ENCODE measurements at regions of chr2 and their contacts with region 1.

Region 1: DNA sequence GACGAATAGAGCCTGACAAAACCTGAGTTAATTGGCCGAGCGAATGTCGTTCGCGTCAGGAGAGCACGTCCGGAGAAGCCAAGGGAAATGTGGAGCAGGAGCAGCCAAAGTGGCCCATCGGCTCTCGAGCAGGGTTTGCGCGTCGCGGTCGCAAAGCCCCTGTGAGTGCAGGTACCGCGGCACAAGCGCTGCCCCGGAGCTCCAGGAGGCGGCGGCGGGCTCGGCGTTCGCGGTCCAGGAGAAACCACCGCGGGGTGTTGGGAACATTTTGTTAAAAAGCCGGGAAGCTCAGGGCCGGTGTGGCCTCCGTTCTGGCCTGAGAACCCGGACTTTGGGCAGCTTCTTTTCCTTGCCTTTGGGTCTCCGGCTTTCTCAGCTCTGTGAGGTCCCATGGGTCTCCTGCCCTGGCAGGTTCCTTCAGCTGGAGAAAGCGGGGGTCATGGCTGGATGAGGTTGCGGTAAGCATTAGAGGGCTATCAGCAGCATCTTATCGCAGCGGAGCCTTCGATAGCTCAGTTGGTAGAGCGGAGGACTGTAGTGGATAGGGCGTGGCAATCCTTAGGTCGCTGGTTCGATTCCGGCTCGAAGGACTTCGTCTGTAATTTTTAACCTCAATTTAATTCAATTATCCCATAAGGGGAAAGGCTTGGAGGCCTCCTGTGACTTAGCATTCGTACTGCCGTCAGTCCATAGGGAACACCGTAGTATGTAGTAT is 1.0 kb upstream of the AGBL5 start:
- DNase-seq: peak; percentile 95
- ATAC-seq: peak; percentile 84
- H3K4me3 Mint-ChIP-seq: peak overlapping the region; percentile 93
- H3K27ac Mint-ChIP-seq: peak overlapping the region; percentile 98
- H3K4me1 Mint-ChIP-seq: peaks cover 12% of the 10 kb centered on the region
- H3K27me3 Mint-ChIP-seq: peaks cover 10% of the 10 kb centered on the region
- CTCF ChIP-seq: no peak

Region 2: DNA sequence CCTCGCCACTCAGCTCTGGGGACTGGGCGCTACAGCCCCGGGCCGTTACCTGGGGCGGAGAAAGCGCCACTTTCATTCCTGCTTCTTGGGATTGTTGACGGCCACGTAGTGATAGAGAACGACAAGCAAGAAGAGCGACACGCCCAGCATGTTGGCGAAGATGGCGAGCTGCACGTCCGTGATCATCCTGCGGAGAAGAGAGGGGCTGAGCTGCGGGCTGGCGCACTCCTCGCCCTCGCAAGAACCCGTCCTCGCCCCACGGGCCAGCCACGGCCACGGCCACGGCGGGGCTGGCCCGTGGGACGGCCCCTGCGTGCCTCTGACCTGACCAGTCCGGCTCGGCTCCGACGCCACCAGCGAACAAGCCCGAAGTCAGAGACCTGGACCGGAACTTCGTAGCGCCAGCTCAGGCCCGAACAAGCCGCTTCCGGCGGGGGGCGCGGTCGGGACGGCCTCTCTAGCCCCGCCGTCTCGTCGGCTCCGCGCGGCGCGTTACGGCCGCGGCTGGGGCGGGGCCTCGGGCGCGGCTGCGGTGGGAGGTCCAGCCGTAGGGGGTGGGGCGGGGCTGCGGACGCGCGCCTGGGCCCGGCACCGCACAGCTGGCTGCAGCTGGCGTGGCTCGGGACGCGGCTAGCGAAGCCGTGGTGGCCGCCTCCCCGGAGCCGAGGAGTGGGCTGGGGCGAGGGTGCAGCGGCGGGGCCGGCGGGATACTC is 21.0 kb after region 1 on chr2 and contains the start of gene OST4:
- CTCF ChIA-PET with region 1: interaction called, 17 read pairs
- POLR2A ChIA-PET with region 1: interaction called, 27 read pairs
- DNase-seq: peak; percentile 90
- ATAC-seq: peak; percentile 89
- H3K4me3 Mint-ChIP-seq: peak within 1 kb of the TSS; percentile 98
- H3K27ac Mint-ChIP-seq: peak within 1 kb of the TSS; percentile 90
- H3K4me1 Mint-ChIP-seq: peaks cover 11% of the 10 kb centered on the region
- H3K27me3 Mint-ChIP-seq: peaks cover 3% of the 10 kb centered on the region
- CTCF ChIP-seq: no peak
- total RNA-seq, gene OST4: 210 to 239 TPM (median 226 TPM) in 3 replicates

Region 3: GRCh38 chr2:27080140-27080469 is 29.7 kb after region 1 on chr2:
- CTCF ChIA-PET with region 1: interaction called, 18 read pairs
- POLR2A ChIA-PET with region 1: interaction called, 3 read pairs
- DNase-seq: no peak
- ATAC-seq: no peak
- H3K4me3 Mint-ChIP-seq: no peak overlapping the region
- H3K27ac Mint-ChIP-seq: no peak overlapping the region
- H3K4me1 Mint-ChIP-seq: peaks cover 22% of the 10 kb centered on the region
- H3K27me3 Mint-ChIP-seq: peaks cover 19% of the 10 kb centered on the region
- CTCF ChIP-seq: no peak

Region 4: DNA sequence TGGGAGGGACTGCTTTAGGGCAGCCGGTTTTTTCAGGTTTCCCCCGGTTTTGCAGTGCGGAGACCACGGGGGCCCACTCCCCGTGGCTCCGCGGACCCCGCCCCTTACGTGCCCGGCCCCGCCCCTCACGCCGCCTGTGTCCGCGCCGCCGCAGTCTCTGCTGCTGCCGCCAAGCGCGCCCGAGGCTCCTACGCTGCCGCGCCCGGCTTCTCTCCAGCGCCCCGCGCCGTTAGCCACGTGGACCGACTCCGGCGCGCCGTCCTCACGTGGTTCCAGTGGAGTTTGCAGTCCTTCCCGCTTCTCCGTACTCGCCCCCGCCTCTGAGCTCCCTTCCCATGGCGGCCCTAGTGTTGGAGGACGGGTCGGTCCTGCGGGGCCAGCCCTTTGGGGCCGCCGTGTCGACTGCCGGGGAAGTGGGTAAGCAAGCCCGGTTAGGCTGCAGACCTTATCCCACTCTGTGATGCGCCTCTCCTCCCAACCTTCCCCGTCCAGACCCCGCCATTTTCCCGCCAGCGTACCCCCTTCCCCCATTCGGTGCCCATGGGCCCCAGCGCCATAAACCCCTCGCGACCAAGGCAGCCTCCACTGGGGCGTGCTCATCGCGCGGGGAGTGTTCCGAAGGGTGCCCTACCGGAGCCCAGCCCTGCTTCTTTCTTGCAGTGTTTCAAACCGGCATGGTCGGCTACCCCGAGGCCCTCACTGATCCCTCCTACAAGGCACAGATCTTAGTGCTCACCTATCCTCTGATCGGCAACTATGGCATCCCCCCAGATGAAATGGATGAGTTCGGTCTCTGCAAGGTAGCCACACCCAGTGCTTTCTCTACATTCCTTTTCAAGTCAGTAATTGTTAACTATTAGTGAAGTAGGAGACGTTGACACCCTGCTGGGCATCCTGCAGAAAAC is 167.0 kb after region 1 on chr2 and contains the start of gene CAD:
- CTCF ChIA-PET with region 1: no interaction called
- POLR2A ChIA-PET with region 1: no interaction called
- DNase-seq: peak; percentile 90
- ATAC-seq: peak; percentile 80
- H3K4me3 Mint-ChIP-seq: peak within 1 kb of the TSS; percentile 90
- H3K27ac Mint-ChIP-seq: peak within 1 kb of the TSS; percentile 98
- H3K4me1 Mint-ChIP-seq: peaks cover 30% of the 10 kb centered on the region
- H3K27me3 Mint-ChIP-seq: no peaks in the 10 kb centered on the region
- CTCF ChIP-seq: no peak
- total RNA-seq, gene CAD: 145 to 178 TPM (median 150 TPM) in 3 replicates

Region 5: GRCh38 chr2:27683390-27684071 is 633.1 kb after region 1 on chr2:
- CTCF ChIA-PET with region 1: no interaction called
- POLR2A ChIA-PET with region 1: no interaction called
- DNase-seq: peak; percentile 84
- ATAC-seq: peak; percentile 95
- H3K4me3 Mint-ChIP-seq: no peak overlapping the region
- H3K27ac Mint-ChIP-seq: no peak overlapping the region; the same call in 1 of the 2 replicates
- H3K4me1 Mint-ChIP-seq: no peaks in the 10 kb centered on the region
- H3K27me3 Mint-ChIP-seq: no peaks in the 10 kb centered on the region
- CTCF ChIP-seq: peak; percentile 98